ENCODE measurements at regions of chr5 and their contacts with region 1.

Region 1: GRCh38 chr5:63398346-63398745 is 563.9 kb downstream of the HTR1A start:
- DNase-seq: no peak
- CTCF ChIP-seq: no peak

Region 2: GRCh38 chr5:63963080-63963735 is 564.9 kb after region 1 on chr5:
- in situ Hi-C with region 1: loop called (anchors 25 kb)
- DNase-seq: peak; percentile 78
- CTCF ChIP-seq: peak; percentile 84

Region 3: DNA sequence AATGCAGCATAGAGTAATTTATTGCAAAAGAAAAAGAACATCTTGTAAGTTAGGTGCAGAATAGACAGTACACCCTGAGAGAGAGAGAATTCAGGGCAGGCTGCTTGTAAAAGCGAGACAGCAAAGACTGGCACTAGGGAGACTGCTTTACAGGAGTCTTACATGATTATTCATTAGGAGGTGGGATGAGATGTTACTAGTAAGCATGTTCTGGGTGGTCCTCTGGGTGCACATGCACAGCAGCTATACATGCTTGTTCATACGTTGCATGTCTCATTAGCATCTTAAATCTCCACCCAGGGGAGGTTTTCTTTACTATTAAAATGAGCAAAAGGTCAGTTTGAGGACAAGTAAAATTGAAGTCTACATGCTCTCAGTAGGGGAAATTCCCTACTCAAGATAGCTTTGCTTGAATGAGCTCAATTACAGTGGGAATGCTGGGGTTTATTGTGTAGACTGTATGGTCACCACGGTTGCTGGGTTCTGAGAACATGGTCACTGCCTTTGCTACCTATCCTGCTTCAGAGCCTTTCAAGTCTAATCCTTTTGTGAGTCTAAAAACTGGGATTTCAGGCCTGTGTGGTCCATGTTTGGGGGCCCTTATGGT is 1168.1 kb after region 1 on chr5:
- in situ Hi-C with region 1: no loop called
- DNase-seq: no peak
- CTCF ChIP-seq: no peak

Measured in GM13977 (cell line).